OCI-LY7 (cell line): ENCODE measurements at regions of chr13 and their contacts with region 1.

Region 1: GRCh38 chr13:50911937-50912795 is 2.6 kb downstream of the RNASEH2B start:
- DNase-seq: peak; percentile 98
- H3K4me3 ChIP-seq: peak overlapping the region; percentile 99
- H3K27ac ChIP-seq: peak overlapping the region; percentile 89
- H3K4me1 ChIP-seq: peaks cover 77% of the 10 kb centered on the region
- CTCF ChIP-seq: peak; percentile 96

Region 2: DNA sequence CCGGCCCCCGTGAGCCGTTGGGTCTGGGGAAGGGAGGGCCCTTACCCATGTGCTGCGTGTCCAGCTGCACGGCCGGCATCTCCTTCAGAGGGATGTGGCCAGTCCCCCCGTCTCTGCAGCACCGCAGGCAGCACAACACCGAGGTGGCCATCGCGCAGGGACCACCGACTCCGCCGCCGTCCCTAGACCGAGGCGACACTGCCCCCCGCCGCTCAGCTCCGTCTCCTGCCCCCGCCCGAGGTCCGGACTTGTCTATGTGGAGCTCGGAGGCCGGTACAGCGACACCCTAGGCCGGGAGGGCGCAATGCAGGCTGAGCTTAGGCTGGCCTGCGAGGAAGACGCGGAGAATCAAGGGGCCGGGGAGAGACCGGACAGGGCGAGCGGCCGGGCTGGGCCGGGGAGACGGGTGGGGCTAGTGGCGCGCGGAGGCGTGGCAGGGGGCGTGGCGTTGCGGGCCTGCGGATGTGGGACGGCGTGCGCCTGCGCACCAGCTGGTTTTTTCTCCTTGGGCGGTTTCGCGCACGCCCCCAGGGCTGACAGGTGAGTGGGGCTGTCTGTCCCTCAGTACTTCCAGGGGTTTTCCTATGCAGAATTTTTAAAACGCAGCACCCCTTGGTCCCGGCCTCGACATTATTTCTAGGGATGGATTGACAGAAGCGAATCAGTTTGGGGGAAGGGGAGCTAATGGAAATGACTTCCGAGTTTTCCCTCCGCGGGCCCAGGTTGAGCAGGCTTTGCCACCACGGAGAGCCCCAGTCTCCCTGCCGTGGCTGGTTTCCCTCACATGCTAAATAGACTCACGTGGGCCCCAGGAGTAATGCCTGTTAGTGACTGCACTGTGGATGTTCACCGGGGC is 975.9 kb before region 1 on chr13 and contains the start of gene SPRYD7:
- CTCF ChIA-PET with region 1: no interaction called
- POLR2A ChIA-PET with region 1: interaction called, 3 read pairs
- intact Hi-C with region 1: loop called (anchors 2 kb)
- DNase-seq: peak; percentile 98
- H3K4me3 ChIP-seq: peak within 1 kb of the TSS; percentile 81
- H3K27ac ChIP-seq: peak within 1 kb of the TSS; percentile 34
- H3K4me1 ChIP-seq: peaks cover 29% of the 10 kb centered on the region
- CTCF ChIP-seq: peak; percentile 84
- total RNA-seq, gene SPRYD7: 5.0 and 6.8 TPM in 2 replicates

Region 3: DNA sequence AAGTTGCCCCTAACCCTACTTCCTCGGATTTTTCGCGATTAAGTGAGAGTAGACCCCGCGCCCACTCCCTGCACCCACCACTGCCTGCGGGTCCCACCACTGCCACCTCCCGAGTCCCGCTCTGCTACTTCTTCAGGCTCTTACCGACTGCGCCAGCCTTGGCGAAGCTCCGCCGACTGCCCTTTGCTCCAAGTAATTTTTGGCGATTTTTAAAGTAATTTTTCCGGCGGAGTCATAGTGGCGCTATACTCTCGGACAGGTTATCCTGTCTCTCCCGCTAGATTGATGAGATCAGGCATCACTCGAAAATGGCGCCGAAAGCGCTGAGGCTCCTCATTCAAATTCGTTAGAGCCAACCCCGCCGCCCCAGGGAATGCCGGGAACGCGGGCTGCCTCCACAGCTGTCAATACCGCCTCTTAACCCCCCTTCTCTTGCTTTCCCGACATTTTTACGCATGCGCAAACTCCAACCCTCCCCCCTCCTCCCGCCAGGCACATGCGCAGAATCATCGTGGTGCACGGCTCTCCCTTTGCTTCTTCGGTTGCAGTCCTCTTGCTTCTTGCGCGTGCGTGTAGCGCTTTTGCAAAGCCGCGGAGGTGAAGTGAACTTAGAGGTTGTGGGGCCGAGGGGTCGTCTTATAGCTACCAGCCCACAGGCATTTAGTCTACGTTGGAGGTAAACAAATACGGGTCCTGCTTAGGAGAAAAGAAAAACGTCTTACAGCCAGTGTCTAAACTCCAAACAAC is 830.3 kb before region 1 on chr13:
- CTCF ChIA-PET with region 1: no interaction called
- POLR2A ChIA-PET with region 1: interaction called, 8 read pairs
- intact Hi-C with region 1: loop called (anchors 2 kb)
- DNase-seq: peak; percentile 98
- H3K4me3 ChIP-seq: peak overlapping the region; percentile 96
- H3K27ac ChIP-seq: peak overlapping the region; percentile 89
- H3K4me1 ChIP-seq: peaks cover 42% of the 10 kb centered on the region
- CTCF ChIP-seq: peak; percentile 63

Region 4: DNA sequence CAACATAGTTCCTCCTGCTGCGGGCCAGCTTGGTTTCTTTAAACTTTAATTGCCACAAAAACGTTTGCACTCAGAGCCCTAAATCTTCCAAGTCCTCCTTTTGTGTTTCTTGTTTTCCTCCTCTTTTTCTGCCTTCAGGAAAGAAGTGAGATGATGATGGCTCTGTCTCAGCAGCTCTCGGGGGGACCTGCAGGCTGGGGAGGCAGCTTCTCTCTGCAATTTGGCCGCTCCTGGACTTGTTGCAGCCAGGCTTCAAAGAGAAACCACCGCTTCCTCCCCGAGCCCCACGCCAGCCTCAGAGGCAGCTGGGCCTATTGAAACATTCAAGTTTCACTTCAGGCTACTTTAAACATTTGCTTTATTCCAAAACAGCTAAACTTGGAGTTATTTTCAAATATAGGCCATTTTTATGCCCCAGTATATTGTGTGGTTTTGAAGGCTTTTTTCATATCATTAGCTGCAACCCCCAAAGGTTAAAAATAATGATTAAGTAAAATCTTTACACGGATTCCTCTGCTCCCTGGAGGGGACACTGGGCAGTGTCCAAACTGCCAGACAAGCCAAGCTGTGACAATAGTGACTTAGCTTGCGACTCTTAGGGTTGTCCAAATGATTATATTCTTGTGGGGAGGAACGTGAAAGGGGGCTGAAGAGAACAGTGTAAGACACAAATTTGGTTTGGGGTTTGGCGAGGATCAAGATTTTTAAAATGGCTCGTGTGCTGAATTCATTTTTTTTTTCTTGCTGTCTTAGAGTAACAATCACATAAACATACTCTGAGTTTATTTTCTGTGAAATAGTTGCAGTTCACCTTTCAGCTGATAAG is 399.5 kb before region 1 on chr13:
- CTCF ChIA-PET with region 1: interaction called, 3 read pairs
- POLR2A ChIA-PET with region 1: interaction called, 13 read pairs
- intact Hi-C with region 1: loop called (anchors 5 kb)
- DNase-seq: peak; percentile 95
- H3K4me3 ChIP-seq: peak overlapping the region; percentile 65
- H3K27ac ChIP-seq: peak overlapping the region; percentile 98
- H3K4me1 ChIP-seq: peaks cover 78% of the 10 kb centered on the region
- CTCF ChIP-seq: peak; percentile 68

Region 5: GRCh38 chr13:50760751-50761150 is 151.4 kb before region 1 on chr13:
- CTCF ChIA-PET with region 1: interaction called, 11 read pairs
- POLR2A ChIA-PET with region 1: interaction called, 5 read pairs
- intact Hi-C with region 1: loop called (anchors 1 kb)
- DNase-seq: no peak
- H3K4me3 ChIP-seq: no peak overlapping the region
- H3K27ac ChIP-seq: no peak overlapping the region
- H3K4me1 ChIP-seq: peaks cover 45% of the 10 kb centered on the region
- CTCF ChIP-seq: no peak

Region 6: DNA sequence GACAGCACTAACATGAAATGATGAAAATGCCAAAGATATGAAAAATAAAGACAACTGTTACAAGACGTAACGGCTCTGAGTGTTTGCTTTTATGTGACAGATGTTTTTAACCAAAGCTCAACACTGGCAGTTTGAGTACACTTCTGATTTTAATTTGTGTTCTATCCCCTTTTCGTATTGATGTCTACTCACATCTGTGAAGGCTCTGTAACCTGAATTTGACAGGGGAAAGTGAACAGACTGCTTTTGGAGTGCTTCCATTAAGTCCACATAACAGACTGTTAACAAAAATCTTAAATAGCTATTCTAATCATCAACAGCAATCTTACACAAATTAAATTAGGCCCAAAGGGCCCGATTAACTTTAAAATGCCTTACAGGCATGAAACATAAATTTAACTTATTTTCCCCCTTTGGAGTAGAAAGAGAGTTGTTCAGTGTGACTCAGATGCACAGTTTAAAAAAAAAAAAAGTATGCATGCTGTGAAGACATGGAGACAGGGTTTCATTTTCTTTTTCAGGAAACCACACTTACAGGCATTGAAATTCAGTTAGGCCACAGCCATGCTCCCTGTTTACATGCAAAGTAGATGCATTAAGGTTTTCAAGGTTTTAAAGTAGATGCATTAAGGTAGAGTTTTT is 18.8 kb before region 1 on chr13:
- CTCF ChIA-PET with region 1: interaction called, 13 read pairs
- POLR2A ChIA-PET with region 1: interaction called, 226 read pairs
- intact Hi-C with region 1: loop called (anchors 1 kb)
- DNase-seq: peak; percentile 93
- H3K4me3 ChIP-seq: peak overlapping the region; percentile 56
- H3K27ac ChIP-seq: peak overlapping the region; percentile 96
- H3K4me1 ChIP-seq: peaks cover 95% of the 10 kb centered on the region
- CTCF ChIP-seq: no peak

Region 7: DNA sequence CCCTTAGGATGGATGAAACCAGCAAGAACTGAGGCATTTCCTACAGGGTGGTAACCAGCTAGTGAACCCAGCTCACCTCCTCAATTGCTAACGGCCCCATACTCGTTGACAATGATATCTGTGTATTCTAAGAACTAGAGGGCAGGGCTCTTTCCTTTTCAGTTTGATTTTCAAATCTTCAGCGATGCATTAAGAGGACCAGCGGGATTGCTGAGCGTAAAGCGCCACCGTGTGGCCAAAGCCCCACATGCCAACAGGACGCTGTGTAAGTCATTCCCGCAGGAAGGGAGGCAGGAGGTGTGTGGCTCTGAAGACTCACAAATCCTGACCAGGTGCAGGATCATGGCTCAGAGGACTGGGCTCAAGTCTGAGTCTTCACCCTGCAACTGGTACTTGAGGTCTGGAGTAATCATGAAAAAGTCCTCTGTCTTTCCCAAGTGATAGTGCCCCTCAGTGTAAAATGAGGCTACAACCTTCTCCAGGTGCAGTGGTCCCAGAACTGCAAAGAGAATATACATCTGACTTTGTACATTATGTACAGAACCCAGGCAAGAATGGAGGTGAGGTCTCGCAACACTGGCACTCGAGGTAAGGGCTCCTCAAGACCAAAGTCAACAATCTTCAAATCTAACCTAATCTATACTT is 158.0 kb after region 1 on chr13:
- CTCF ChIA-PET with region 1: no interaction called
- POLR2A ChIA-PET with region 1: interaction called, 4 read pairs
- intact Hi-C with region 1: loop called (anchors 2 kb)
- DNase-seq: peak; percentile 88
- H3K4me3 ChIP-seq: no peak overlapping the region
- H3K27ac ChIP-seq: no peak overlapping the region
- H3K4me1 ChIP-seq: peaks cover 5% of the 10 kb centered on the region
- CTCF ChIP-seq: peak; percentile 98